Dendritic cell treated with granulocyte-macrophage colony-stimulating factor and Interleukin-4, amounts not matched to agents 40 ng/mL and 50 ng/mL, for 4 days (primary cell): ENCODE measurements at regions of chr17 and their contacts with region 1.

Region 1: GRCh38 chr17:63773381-63774140 is at the start of gene CCDC47:
- H3K4me3 Mint-ChIP-seq: peak within 1 kb of the TSS; percentile 98
- H3K27ac Mint-ChIP-seq: peak within 1 kb of the TSS; percentile 98
- H3K4me1 Mint-ChIP-seq: peaks cover 50% of the 10 kb centered on the region
- H3K27me3 Mint-ChIP-seq: no peaks in the 10 kb centered on the region

Region 2: GRCh38 chr17:63714547-63715277 is 58.8 kb before region 1 on chr17:
- intact Hi-C with region 1: no loop called
- H3K4me3 Mint-ChIP-seq: no peak overlapping the region
- H3K27ac Mint-ChIP-seq: no peak overlapping the region
- H3K4me1 Mint-ChIP-seq: peaks cover 5% of the 10 kb centered on the region
- H3K27me3 Mint-ChIP-seq: no peaks in the 10 kb centered on the region

Region 3: GRCh38 chr17:63809970-63810369 is 36.4 kb after region 1 on chr17:
- intact Hi-C with region 1: no loop called
- H3K4me3 Mint-ChIP-seq: no peak overlapping the region
- H3K27ac Mint-ChIP-seq: no peak overlapping the region
- H3K4me1 Mint-ChIP-seq: no peaks in the 10 kb centered on the region
- H3K27me3 Mint-ChIP-seq: no peaks in the 10 kb centered on the region

Region 4: DNA sequence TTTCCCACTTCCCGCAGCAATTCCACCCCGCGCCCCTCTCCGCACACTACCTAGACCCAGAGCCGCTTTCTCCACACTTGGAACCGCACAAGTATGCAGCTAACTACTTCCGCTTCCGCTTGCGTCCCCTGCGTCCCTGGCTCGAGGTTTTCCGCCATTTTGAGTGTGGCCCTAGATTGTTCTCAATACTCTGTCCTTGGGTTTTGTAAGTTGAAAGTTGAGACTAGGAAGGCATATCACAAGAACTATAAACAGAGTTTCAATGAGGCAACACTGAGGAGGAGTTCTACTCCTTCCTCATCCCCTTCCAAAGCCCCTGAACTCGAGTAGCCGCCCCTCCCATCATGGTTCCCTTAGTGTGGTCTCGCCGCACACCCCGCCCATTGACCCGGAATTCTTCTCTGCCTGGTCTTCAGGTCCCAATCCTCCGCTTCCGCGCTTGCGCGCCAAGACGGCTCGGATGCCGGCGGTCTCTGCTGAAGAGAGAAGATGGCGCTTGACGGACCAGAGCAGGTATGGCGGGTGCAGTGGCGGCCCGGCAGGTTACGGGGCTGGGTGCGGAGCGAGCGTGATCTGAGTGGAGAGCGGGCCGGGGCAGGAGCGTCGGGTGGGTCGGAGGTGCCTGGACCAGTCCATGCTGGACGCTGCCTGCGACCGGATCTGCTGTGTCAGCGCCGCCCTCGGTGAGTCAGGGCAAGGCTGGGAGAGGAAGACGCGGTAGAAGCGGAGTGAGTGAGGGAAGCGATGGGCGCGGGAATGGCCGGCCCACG is 53.6 kb after region 1 on chr17 and contains the starts of genes FTSJ3 and PSMC5:
- intact Hi-C with region 1: loop called (anchors 5 kb)
- H3K4me3 Mint-ChIP-seq: peak within 1 kb of the TSS; percentile 90
- H3K27ac Mint-ChIP-seq: peak within 1 kb of the TSS; percentile 94
- H3K4me1 Mint-ChIP-seq: peaks cover 53% of the 10 kb centered on the region
- H3K27me3 Mint-ChIP-seq: no peaks in the 10 kb centered on the region